ENCODE measurements at regions of chr10 and their contacts with region 1.

Region 1: GRCh38 chr10:89481662-89482061 is 53.7 kb downstream of the SLC16A12 start:
- DNase-seq: no peak
- ATAC-seq: peak; percentile 59

Region 2: GRCh38 chr10:89431977-89432376 is 49.7 kb before region 1 on chr10:
- intact Hi-C with region 1: loop called (anchors 5 kb)
- DNase-seq: no peak
- ATAC-seq: peak; percentile 28

Region 3: GRCh38 chr10:89516149-89516832 is 34.6 kb after region 1 on chr10:
- intact Hi-C with region 1: loop called (anchors 5 kb)
- DNase-seq: peak; percentile 72
- ATAC-seq: peak; percentile 69